ENCODE measurements at regions of chr3 and their contacts with region 1.

Region 1: DNA sequence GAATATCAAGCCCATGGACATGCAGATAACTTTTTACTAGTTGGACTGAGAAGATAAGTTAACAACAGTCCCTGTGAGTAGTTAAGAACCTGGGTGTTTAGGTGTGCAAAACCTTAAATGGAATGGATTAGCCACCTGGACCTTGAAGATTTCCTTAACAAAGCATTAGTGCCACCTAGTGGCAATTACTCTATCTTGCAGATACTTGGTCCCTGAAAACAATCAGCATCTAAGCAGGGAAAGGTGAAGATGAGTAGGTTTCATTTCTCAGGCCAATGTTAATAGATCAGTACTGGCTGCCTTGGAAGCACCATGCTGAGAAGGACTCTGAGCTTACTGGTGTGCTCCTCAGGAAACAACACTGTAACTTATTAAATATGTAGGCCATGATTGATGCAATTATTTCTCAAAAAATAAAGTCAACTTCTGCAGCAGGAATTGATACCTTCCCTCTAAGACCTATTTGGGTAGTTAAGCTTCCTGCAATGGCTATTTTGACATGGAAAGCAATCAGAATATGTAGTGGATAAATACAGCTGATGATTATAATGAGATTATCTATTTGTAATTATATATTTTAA is 329.4 kb downstream of the TBC1D5 start:
- DNase-seq: no peak
- H3K4me3 Mint-ChIP-seq: no peak overlapping the region
- H3K27ac Mint-ChIP-seq: no peak overlapping the region
- H3K4me1 Mint-ChIP-seq: no peaks in the 10 kb centered on the region
- H3K27me3 Mint-ChIP-seq: no peaks in the 10 kb centered on the region

Region 2: DNA sequence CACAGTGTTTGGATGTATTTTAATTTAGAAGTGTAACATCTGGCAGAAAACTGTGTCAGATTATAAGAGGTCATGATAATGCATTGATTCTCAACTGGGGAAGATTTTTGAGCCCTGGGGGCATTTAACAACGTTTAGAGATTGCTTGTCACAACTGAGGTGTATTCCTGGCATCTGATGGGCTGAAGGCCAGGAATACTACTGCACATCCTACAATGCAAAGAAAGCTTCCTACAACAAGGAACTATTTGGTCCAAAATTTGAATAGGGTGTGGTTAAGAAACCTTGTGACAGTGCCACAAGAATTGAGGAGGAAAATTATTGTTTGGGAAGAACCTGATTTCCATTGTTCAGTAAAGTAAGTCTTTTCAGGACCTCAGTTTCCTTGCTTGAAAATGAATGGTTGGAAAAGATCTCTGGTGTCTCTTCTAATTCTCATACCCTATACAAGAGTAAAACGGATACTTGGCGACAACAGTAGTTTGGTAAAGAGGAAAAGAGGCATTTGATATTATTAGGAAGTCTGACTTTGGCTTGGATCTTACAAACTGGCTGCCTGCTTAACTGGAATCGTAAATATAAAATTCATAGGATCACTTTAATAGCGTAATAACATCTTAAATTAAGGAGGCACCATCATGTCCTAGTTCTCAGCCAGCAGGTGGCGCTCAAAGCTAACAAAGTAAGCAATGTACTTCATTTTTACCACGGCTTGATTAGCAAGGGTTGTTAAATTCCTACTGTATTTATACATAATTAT is 812.1 kb before region 1 on chr3:
- CTCF ChIA-PET with region 1: interaction called, 5 read pairs
- POLR2A ChIA-PET with region 1: no interaction called
- intact Hi-C with region 1: loop called (anchors 5 kb)
- DNase-seq: peak; percentile 81
- H3K4me3 Mint-ChIP-seq: no peak overlapping the region
- H3K27ac Mint-ChIP-seq: no peak overlapping the region
- H3K4me1 Mint-ChIP-seq: peaks cover 24% of the 10 kb centered on the region
- H3K27me3 Mint-ChIP-seq: peaks cover 10% of the 10 kb centered on the region

Region 3: GRCh38 chr3:17258823-17259436 is 154.1 kb before region 1 on chr3:
- CTCF ChIA-PET with region 1: interaction called, 15 read pairs
- POLR2A ChIA-PET with region 1: no interaction called
- intact Hi-C with region 1: loop called (anchors 1 kb)
- DNase-seq: no peak
- H3K4me3 Mint-ChIP-seq: no peak overlapping the region
- H3K27ac Mint-ChIP-seq: no peak overlapping the region
- H3K4me1 Mint-ChIP-seq: no peaks in the 10 kb centered on the region
- H3K27me3 Mint-ChIP-seq: no peaks in the 10 kb centered on the region

Region 4: DNA sequence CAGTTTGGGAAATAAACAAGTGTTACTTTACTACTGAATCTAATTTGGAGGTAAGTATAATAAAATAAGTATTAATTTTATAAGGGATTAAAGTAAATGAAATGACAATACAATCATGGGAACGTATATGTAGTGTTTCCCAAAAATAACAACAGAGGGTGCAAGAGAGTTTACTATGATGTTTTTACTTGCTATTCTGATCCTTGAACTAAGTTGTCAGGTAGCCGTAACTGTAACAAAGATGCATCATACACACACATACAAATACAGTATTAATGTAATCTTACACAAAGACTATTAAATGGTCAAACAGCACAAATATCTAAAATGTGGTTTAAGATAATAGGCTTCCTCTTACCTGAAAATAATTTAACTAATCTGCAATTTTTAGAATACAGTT is 18.0 kb after region 1 on chr3:
- CTCF ChIA-PET with region 1: interaction called, 12 read pairs
- POLR2A ChIA-PET with region 1: no interaction called
- intact Hi-C with region 1: no loop called
- DNase-seq: no peak
- H3K4me3 Mint-ChIP-seq: no peak overlapping the region
- H3K27ac Mint-ChIP-seq: no peak overlapping the region
- H3K4me1 Mint-ChIP-seq: no peaks in the 10 kb centered on the region
- H3K27me3 Mint-ChIP-seq: no peaks in the 10 kb centered on the region